ENCODE measurements at regions of chr20 and their contacts with region 1.

Region 1: GRCh38 chr20:4956200-4956810 is 45.0 kb downstream of the SLC23A2 start:
- DNase-seq: peak; percentile 74
- ATAC-seq: peak; percentile 56
- H3K4me3 ChIP-seq: no peak overlapping the region
- H3K4me3 Mint-ChIP-seq: no peak overlapping the region
- H3K27ac ChIP-seq: no peak overlapping the region
- H3K27ac Mint-ChIP-seq: no peak overlapping the region
- H3K4me1 ChIP-seq: peaks cover 4 to 6% of the 10 kb centered on the region in 2 donors
- H3K4me1 Mint-ChIP-seq: peaks cover 22% of the 10 kb centered on the region
- H3K27me3 ChIP-seq: no peaks in the 10 kb centered on the region
- H3K27me3 Mint-ChIP-seq: no peaks in the 10 kb centered on the region
- CTCF ChIP-seq: peak; percentile 89

Region 2: GRCh38 chr20:4592316-4593148 is 363.8 kb before region 1 on chr20:
- CTCF ChIA-PET with region 1: no interaction called
- POLR2A ChIA-PET with region 1: no interaction called
- intact Hi-C with region 1: no loop called
- DNase-seq: peak; percentile 63
- ATAC-seq: peak; percentile 82
- H3K4me3 ChIP-seq: peak overlapping the region in 4 of 5 experiments; percentile 37 to 50 (median 45)
- H3K4me3 Mint-ChIP-seq: peak overlapping the region; percentile 74
- H3K27ac ChIP-seq: no peak overlapping the region
- H3K27ac Mint-ChIP-seq: no peak overlapping the region
- H3K4me1 ChIP-seq: peaks cover 9 to 10% of the 10 kb centered on the region in 2 donors
- H3K4me1 Mint-ChIP-seq: peaks cover 7% of the 10 kb centered on the region
- H3K27me3 ChIP-seq: peaks cover 0 to 15% (median 6%) of the 10 kb centered on the region in 4 experiments
- H3K27me3 Mint-ChIP-seq: peaks cover 31% of the 10 kb centered on the region
- CTCF ChIP-seq: peak; percentile 98

Region 3: DNA sequence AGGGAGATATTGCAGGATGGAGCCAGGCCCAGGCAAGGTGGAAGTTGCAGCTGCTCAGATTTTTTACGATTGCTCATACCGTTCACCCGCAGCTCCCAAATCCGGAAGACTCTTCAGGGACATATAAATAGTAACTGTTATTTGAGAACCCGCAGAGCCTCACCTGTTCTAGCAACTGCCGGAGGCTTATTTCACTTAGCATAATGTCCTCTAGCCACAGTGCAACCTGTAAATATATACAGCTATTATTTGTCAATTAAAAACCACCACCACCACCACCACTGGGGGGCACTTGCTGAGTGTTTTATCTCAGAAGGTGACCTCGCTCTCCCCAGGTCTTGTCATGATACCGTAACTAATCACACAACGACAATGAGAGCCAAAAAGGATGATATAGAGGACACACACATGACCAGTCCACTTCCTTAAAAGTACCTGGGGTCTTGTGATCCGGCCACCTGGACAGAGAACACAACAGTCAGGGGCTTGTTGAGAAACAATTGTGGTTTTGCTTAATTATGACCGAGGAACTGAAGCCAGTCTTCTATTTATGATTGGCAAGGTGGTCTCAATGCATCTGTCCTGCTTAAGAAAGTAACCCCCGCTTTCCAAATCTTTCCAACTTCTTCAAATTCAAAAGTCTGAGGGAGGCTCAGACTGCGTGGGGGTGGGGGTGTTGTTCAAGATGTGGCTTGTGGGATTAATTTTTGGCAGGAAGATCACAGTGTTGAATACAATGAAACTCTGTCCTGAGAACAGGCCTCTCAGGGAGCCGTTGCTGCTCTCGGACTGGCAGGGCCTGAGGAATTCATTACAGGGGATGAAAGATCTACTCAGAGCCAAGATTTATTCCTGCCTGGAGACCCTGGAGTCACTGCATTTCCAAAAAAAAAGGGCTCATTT is 342.3 kb before region 1 on chr20:
- CTCF ChIA-PET with region 1: interaction called, 15 read pairs
- POLR2A ChIA-PET with region 1: no interaction called
- intact Hi-C with region 1: no loop called
- DNase-seq: peak; percentile 81
- ATAC-seq: peak; percentile 96
- H3K4me3 ChIP-seq: no peak overlapping the region
- H3K4me3 Mint-ChIP-seq: peak overlapping the region; percentile 46
- H3K27ac ChIP-seq: peak overlapping the region in 1 of 2 donors; percentile 16
- H3K27ac Mint-ChIP-seq: peak overlapping the region; percentile 78
- H3K4me1 ChIP-seq: peaks cover 12 to 15% of the 10 kb centered on the region in 2 donors
- H3K4me1 Mint-ChIP-seq: peaks cover 14% of the 10 kb centered on the region
- H3K27me3 ChIP-seq: no peaks in the 10 kb centered on the region
- H3K27me3 Mint-ChIP-seq: no peaks in the 10 kb centered on the region
- CTCF ChIP-seq: peak; percentile 71

Region 4: GRCh38 chr20:4813863-4814695 is 142.2 kb before region 1 on chr20:
- CTCF ChIA-PET with region 1: interaction called, 18 read pairs
- POLR2A ChIA-PET with region 1: no interaction called
- intact Hi-C with region 1: loop called (anchors 5 kb)
- DNase-seq: peak; percentile 94
- ATAC-seq: peak; percentile 48
- H3K4me3 ChIP-seq: peak overlapping the region; percentile 49 to 67 (median 50)
- H3K4me3 Mint-ChIP-seq: peak overlapping the region; percentile 92
- H3K27ac ChIP-seq: peak overlapping the region; percentile 99
- H3K27ac Mint-ChIP-seq: peak overlapping the region; percentile 99
- H3K4me1 ChIP-seq: peaks cover 69 to 82% of the 10 kb centered on the region in 2 donors
- H3K4me1 Mint-ChIP-seq: peaks cover 87% of the 10 kb centered on the region
- H3K27me3 ChIP-seq: no peaks in the 10 kb centered on the region
- H3K27me3 Mint-ChIP-seq: no peaks in the 10 kb centered on the region
- CTCF ChIP-seq: peak; percentile 12

Region 5: DNA sequence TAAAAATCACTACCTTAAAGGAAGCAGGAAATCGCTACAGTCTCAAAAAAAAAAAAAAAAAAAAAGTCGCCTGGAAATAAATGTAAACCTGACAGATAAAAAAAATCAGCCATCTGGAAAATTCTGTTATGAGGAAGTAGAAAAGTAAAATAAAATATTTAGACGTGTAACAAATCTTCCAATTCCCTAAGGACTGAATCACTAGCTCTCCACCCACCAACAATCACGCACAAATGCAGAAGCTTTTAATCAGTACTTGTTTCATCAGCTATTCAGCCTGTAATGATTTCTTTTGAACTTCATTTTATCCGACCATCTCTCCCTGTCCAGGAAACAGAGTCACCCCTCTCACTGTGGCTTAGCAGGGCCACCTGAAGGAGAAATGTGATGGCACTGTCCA is 14.0 kb before region 1 on chr20:
- CTCF ChIA-PET with region 1: interaction called, 18 read pairs
- POLR2A ChIA-PET with region 1: no interaction called
- intact Hi-C with region 1: no loop called
- DNase-seq: peak; percentile 40
- ATAC-seq: peak; percentile 40
- H3K4me3 ChIP-seq: no peak overlapping the region
- H3K4me3 Mint-ChIP-seq: peak overlapping the region; percentile 55
- H3K27ac ChIP-seq: peak overlapping the region in 1 of 2 donors; percentile 69
- H3K27ac Mint-ChIP-seq: peak overlapping the region; percentile 80
- H3K4me1 ChIP-seq: peaks cover 30 to 33% of the 10 kb centered on the region in 2 donors
- H3K4me1 Mint-ChIP-seq: peaks cover 56% of the 10 kb centered on the region
- H3K27me3 ChIP-seq: no peaks in the 10 kb centered on the region
- H3K27me3 Mint-ChIP-seq: no peaks in the 10 kb centered on the region
- CTCF ChIP-seq: no peak

Region 6: DNA sequence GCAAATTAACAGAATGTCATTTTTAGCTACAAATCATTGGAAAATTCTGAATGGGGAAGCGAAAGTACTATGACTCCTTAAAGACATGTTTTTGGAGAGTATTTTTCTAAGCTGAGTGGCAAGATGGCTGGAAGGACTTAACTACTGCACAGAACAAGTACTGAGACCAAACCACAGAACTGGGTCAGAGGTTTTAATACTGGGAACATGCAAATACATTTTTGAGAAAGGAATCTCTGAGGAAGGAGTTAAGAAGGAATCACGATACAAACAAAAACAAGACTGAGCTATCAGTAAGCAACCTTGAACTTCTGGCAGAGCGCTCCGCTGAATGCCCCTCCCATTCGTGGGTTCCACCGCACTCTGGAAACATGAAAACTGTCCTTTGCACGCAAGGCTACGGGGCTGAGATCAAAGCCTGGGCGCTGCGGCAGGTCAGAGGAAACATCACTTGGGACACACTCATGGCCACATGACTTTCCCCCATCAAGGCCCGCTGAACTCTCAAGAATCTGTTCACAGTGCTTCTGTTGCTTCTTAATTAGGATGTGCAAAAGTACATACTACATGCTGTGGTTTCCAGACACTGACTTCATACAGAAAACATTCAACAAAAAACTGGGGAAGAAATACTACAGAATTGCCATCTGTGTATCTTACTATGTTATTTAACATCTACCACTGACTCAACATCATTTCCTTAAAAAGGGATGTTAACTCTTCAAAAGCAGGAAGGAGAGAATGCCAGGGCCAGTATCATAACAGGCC is 17.2 kb after region 1 on chr20:
- CTCF ChIA-PET with region 1: interaction called, 21 read pairs
- POLR2A ChIA-PET with region 1: no interaction called
- intact Hi-C with region 1: loop called (anchors 2 kb)
- DNase-seq: peak; percentile 66
- ATAC-seq: peak; percentile 83
- H3K4me3 ChIP-seq: peak overlapping the region in 4 of 5 experiments; percentile 16 to 58 (median 40)
- H3K4me3 Mint-ChIP-seq: peak overlapping the region; percentile 87
- H3K27ac ChIP-seq: peak overlapping the region; percentile 36 to 40
- H3K27ac Mint-ChIP-seq: peak overlapping the region; percentile 84
- H3K4me1 ChIP-seq: peaks cover 21 to 30% of the 10 kb centered on the region in 2 donors
- H3K4me1 Mint-ChIP-seq: peaks cover 46% of the 10 kb centered on the region
- H3K27me3 ChIP-seq: no peaks in the 10 kb centered on the region
- H3K27me3 Mint-ChIP-seq: no peaks in the 10 kb centered on the region
- CTCF ChIP-seq: no peak

Region 7: DNA sequence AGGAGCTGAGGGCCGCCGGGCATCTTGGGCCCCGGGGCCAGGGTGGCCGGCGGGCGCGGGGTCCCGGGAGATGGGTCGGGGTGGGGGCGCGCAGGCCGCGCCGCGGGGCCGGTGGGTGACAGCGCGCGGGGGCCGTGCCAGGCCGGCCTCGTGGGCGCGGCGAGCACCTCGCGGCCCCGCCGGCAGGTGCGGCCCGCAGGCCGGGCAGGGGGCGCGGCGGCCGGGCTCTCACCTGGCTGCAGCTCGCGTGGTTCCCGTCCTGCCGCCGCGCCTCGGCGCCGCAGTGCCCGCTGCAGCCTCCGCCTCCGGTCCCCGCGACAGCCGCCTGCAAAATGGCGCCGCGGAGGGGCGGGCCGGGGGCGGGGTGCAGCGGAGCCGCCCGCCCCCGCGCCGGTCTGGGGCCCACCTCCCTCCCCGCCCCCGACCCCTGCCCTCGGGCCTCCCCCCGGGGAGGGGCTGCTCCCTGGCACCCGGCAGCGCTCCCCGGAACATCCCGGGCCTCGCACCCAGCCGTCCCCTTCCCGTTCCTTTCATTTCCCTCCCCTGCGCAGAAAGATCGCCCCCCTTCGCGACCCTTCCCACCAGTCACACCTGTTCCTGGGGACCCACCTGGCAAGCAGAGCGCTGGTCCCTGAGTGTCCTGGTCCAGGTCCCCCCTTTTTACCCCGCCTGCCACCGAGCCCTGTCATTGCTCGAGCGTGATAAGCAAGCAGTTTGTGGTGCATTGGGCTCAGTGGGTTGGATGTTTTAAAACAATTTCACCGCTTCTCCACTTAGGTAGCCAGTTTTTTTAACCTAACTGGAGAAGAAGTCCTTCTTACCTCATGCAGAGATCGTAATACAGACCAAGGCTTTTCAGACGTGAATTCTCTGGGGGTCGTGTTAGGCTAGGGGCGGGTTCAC is 45.1 kb after region 1 on chr20 and contains the start of gene SLC23A2:
- CTCF ChIA-PET with region 1: interaction called, 7 read pairs
- POLR2A ChIA-PET with region 1: no interaction called
- intact Hi-C with region 1: loop called (anchors 1 kb)
- DNase-seq: peak; percentile 73
- ATAC-seq: peak; percentile 77
- H3K4me3 ChIP-seq: peak within 1 kb of the TSS; percentile 51 to 81 (median 71)
- H3K4me3 Mint-ChIP-seq: peak within 1 kb of the TSS; percentile 97
- H3K27ac ChIP-seq: peak within 1 kb of the TSS; percentile 43 to 71
- H3K27ac Mint-ChIP-seq: peak within 1 kb of the TSS; percentile 97
- H3K4me1 ChIP-seq: peaks cover 28 to 39% of the 10 kb centered on the region in 2 donors
- H3K4me1 Mint-ChIP-seq: peaks cover 37% of the 10 kb centered on the region
- H3K27me3 ChIP-seq: no peaks in the 10 kb centered on the region
- H3K27me3 Mint-ChIP-seq: no peaks in the 10 kb centered on the region
- CTCF ChIP-seq: no peak
- total RNA-seq, gene SLC23A2: 70.7 and 75.2 TPM in 2 replicates

Measured in B cell (primary cell).